Mammary epithelial cell (primary cell): ENCODE measurements at regions of chr4 and their contacts with region 1.

Region 1: DNA sequence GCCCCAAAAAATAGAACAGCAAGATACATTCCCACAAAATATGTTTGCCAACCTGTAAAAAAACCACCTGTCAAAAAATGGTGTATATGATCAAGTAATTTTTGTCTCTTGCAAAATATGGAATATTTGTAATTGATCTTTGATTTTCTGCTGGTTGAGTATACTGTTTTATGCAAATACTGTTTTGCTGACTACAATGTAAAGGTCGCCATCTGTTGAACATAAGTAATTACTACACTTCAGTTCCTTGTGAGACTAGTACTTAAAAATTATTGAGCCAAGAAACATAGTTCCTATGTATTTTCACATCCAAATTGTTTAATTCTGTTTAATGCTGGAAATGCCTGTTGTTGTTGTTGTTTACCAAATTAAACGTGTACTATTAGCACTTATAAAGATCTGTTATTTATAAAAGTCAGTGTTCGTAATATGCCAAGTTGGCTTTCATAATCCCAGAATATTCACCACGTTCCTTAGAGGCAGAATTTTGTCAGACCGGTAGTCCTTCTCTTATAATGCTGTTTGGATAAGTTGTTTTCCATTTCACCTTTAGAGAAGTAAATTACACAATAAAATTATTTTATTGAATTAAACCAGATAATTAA is 144.2 kb downstream of the PDLIM5 start:
- DNase-seq: peak; percentile 34
- H3K4me3 ChIP-seq: no peak overlapping the region
- H3K27ac ChIP-seq: no peak overlapping the region
- H3K4me1 ChIP-seq: no peaks in the 10 kb centered on the region
- H3K27me3 ChIP-seq: no peaks in the 10 kb centered on the region
- CTCF ChIP-seq: peak; percentile 44 to 56

Region 2: DNA sequence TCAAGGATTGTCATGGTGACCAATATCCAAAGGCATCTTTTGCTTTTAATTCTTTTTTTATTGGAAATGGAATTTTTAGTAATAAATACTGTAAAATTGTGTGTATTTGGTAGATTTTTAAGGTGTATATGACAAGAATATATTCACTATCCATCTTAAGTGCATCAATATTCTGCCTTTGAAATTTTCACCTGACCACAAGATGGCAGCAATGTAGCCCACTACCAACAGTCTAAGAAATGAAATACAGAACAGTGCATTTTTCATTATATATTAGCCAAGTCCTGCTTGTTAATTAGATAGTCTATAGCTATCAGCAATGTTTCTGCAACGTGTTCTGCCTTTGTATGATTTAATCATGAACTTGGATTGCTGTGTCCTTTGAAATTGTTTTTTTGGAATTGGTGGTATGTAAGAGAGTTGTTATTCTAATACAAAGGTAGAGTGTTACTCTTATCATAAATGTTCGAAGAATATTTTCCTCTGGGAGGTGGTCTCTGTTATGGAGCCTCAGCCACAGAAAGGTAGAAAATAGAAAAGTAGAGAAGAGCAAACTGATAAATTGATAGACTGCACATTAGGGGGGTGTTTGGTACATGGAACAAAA is 291.5 kb before region 1 on chr4:
- CTCF ChIA-PET with region 1: no interaction called
- dilution Hi-C with region 1: no loop called
- in situ Hi-C with region 1: no loop called
- intact Hi-C with region 1: loop called (anchors 2 kb)
- DNase-seq: peak; percentile 15
- H3K4me3 ChIP-seq: no peak overlapping the region
- H3K27ac ChIP-seq: no peak overlapping the region
- H3K4me1 ChIP-seq: no peaks in the 10 kb centered on the region
- H3K27me3 ChIP-seq: no peaks in the 10 kb centered on the region
- CTCF ChIP-seq: peak; percentile 52 to 65

Region 3: GRCh38 chr4:94406668-94407437 is 189.1 kb before region 1 on chr4:
- CTCF ChIA-PET with region 1: interaction called, 3 read pairs
- dilution Hi-C with region 1: no loop called
- in situ Hi-C with region 1: loop called (anchors 5 to 10 kb)
- intact Hi-C with region 1: loop called (anchors 1 kb)
- DNase-seq: peak; percentile 59
- H3K4me3 ChIP-seq: no peak overlapping the region
- H3K27ac ChIP-seq: no peak overlapping the region
- H3K4me1 ChIP-seq: no peaks in the 10 kb centered on the region
- H3K27me3 ChIP-seq: no peaks in the 10 kb centered on the region
- CTCF ChIP-seq: peak; percentile 85 to 91